Left cardiac atrium (tissue), 4 donors: ENCODE measurements at regions of chr22 and their contacts with region 1.

Region 1: GRCh38 chr22:27799334-27800249 is 2.0 kb downstream of the MN1 start:
- DNase-seq: peak; percentile 62
- ATAC-seq: peak; percentile 14 to 21

Region 2: GRCh38 chr22:27299181-27300085 is 500.2 kb before region 1 on chr22:
- intact Hi-C with region 1: no loop called
- DNase-seq: no peak
- ATAC-seq: peak; percentile 56 to 57

Region 3: GRCh38 chr22:27726697-27727449 is 72.7 kb before region 1 on chr22:
- intact Hi-C with region 1: loop called in 1 of 2 experiments (anchors 10 kb)
- DNase-seq: peak; percentile 87
- ATAC-seq: peak; percentile 73 to 98

Region 4: GRCh38 chr22:27885977-27886842 is 86.6 kb after region 1 on chr22:
- intact Hi-C with region 1: no loop called
- DNase-seq: no peak
- ATAC-seq: peak in 1 of 2 donors; percentile 35